T-cell (primary cell): ENCODE measurements at regions of chr19 and their contacts with region 1.

Region 1: GRCh38 chr19:782185-782877 is 14.9 kb upstream of the PTBP1 start:
- DNase-seq: no peak
- ATAC-seq: no peak
- H3K4me3 ChIP-seq: no peak overlapping the region
- H3K4me3 Mint-ChIP-seq: no peak overlapping the region
- H3K27ac ChIP-seq: no peak overlapping the region
- H3K27ac Mint-ChIP-seq: no peak overlapping the region
- H3K4me1 ChIP-seq: no peaks in the 10 kb centered on the region
- H3K4me1 Mint-ChIP-seq: no peaks in the 10 kb centered on the region
- H3K27me3 ChIP-seq: peaks cover 0 to 44% of the 10 kb centered on the region in 2 experiments
- H3K27me3 Mint-ChIP-seq: peaks cover 3% of the 10 kb centered on the region in 2 donors

Region 2: GRCh38 chr19:814258-815078 is 32.1 kb after region 1 on chr19:
- CTCF ChIA-PET with region 1: no interaction called
- POLR2A ChIA-PET with region 1: no interaction called
- DNase-seq: no peak
- ATAC-seq: peak in 2 of 4 experiments; percentile 5 to 12
- H3K4me3 ChIP-seq: no peak overlapping the region
- H3K4me3 Mint-ChIP-seq: no peak overlapping the region
- H3K27ac ChIP-seq: no peak overlapping the region
- H3K27ac Mint-ChIP-seq: no peak overlapping the region
- H3K4me1 ChIP-seq: no peaks in the 10 kb centered on the region
- H3K4me1 Mint-ChIP-seq: peaks cover 0 to 7% (median 0%) of the 10 kb centered on the region in 3 donors
- H3K27me3 ChIP-seq: no peaks in the 10 kb centered on the region
- H3K27me3 Mint-ChIP-seq: no peaks in the 10 kb centered on the region

Region 3: DNA sequence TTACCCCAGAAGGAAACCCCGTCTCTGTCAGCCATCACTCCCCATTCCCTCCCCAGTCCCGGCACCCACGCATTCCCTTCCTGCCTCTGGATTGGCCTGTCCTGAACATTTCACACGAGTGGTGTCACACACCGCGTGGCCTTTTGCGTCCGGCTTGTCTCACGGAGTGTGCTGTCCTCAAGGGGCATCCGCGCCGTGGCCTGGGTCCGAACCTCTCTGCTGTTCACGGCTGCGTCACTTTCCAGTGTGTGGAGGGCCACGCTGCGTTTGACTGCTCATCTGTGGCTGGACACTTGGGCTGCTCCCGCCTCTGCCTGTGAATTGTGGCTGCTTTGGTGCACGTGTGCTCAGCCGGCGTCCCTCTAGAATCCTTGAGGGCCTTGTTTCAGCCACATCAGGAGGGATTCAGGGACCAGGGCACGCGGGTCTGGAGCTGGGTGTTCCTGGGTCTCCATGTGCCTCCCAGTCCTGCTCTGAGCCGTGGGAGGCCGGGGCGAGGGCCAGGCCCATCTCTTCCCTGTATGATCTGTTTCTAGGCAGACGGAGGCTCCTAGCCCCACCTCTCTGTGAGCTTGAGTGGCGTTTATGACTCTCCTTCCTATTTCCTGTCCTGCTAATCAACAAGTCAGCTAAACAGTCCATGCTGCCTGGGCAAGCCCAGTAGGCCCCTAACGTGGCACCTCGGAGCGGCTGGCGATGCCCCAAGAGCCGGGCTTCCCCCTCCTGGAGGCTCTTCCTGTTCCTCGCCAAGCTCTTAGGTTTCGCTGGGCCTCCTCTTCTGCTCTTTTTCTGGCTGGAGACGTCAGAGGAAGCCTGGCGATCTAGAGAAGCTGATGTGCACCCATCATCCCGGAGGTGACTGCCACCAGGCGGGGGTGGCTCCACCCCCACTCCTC is 431.3 kb after region 1 on chr19:
- CTCF ChIA-PET with region 1: no interaction called
- POLR2A ChIA-PET with region 1: no interaction called
- DNase-seq: peak in 33 of 35 experiments; percentile 30 to 76 (median 56)
- ATAC-seq: peak; percentile 69 to 96 (median 72)
- H3K4me3 ChIP-seq: peak overlapping the region; percentile 23 to 38
- H3K4me3 Mint-ChIP-seq: peak overlapping the region; percentile 69 to 83 (median 72)
- H3K27ac ChIP-seq: peak overlapping the region; percentile 74
- H3K27ac Mint-ChIP-seq: peak overlapping the region; percentile 92
- H3K4me1 ChIP-seq: peaks cover 16 to 52% of the 10 kb centered on the region in 2 experiments
- H3K4me1 Mint-ChIP-seq: peaks cover 29 to 40% (median 38%) of the 10 kb centered on the region in 3 donors
- H3K27me3 ChIP-seq: no peaks in the 10 kb centered on the region
- H3K27me3 Mint-ChIP-seq: no peaks in the 10 kb centered on the region

Region 4: DNA sequence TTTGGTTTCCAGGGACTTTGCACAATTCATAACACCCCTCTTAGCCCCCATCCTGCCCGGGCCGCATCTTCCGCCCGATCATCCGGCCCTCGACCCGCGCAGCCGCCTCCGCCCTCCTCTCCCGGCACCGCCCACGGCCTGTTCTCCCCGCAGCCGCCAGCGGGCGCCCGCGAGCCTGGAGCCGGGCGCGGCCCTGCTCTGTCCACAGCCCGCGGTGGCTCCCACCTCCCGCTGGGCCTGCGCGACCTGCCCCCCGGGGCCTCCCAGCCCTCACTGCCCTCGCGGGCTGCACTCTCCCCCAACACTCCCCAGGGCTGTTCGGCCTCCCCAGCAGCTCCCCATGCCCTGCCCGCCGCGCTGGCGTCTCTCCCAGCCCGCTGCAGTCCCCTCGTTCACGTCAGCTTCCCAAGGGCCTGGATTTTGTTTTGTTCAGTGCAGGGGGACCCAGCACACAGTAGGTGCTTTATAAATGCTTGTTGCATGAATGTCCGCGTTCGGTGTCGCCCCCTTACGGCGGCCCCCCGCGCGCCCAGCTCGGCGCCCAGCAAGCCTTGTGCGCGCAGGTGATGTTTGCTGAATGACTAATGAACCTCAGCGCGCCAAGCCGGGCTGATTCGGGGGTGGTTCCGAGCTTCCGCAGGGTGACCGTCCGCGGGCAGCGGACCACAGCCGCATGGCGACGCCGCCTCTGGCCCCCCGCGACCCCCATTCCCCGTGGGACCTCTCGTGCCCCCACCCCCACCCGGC is 663.0 kb after region 1 on chr19:
- CTCF ChIA-PET with region 1: interaction called in 1 of 2 experiments, 10 read pairs
- POLR2A ChIA-PET with region 1: no interaction called
- DNase-seq: peak; percentile 33 to 85 (median 67)
- ATAC-seq: peak; percentile 81 to 93 (median 92)
- H3K4me3 ChIP-seq: peak overlapping the region; percentile 51 to 56
- H3K4me3 Mint-ChIP-seq: peak overlapping the region; percentile 65 to 73 (median 66)
- H3K27ac ChIP-seq: no peak overlapping the region
- H3K27ac Mint-ChIP-seq: no peak overlapping the region
- H3K4me1 ChIP-seq: peaks cover 2 to 54% of the 10 kb centered on the region in 2 experiments
- H3K4me1 Mint-ChIP-seq: peaks cover 11 to 45% (median 24%) of the 10 kb centered on the region in 3 donors
- H3K27me3 ChIP-seq: peaks cover 2 to 43% of the 10 kb centered on the region in 2 experiments
- H3K27me3 Mint-ChIP-seq: peaks cover 17 to 30% of the 10 kb centered on the region in 2 donors